ENCODE measurements at regions of chr2 and their contacts with region 1.

Region 1: DNA sequence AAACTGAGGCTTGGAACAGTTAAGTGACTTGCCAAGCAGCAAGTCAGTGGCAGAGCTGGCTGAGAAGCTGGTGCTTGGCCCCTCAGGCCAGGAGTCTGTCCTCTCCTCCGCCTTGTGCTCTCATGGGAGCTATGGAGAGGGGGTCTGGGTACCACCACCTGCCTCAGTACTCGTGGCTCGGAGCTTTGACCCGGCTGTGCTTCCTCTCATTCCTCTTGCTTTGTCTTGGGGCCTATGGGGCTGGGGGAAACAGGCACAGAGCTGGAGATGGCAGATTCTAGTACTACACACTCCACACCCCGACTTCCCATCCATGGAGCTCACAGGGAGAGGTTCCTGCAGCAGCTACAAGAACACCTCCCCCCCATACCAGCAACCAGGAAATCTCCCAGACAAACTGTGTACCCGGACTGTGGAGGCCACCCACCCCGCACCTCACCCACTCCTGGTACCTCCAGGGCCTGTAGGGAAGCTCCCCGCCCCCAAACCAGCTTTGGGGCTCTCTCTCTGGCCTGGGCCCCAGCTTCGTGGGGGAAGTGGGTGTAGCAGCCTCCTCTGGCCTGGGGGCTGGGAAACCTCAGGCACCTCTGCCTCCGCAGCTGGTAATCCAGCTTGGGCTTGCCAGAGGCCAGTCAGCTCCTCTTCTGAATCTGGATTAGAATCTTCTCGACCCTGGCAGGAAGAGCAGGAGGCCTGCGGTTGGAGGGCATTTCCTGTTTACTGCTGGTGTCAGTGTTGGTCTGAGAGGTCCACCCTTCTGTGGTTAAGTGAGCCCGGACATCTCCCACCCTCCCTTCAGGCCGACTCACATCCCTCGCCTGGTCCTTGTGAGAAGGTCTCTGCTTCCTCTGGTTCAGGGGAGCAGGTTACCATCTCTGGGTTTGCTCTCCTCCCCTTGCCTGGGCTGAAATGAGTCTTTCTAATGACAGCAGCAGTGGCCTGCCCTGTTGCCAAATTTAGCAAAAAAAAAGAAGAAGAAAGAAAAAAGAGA is 22.3 kb upstream of the RHOB start:
- DNase-seq: peak; percentile 57
- ATAC-seq: peak; percentile 76
- H3K4me3 ChIP-seq: peak overlapping the region; percentile 17; the same call in 1 of the 2 replicates
- H3K27ac ChIP-seq: peak overlapping the region; percentile 68
- H3K4me1 ChIP-seq: peaks cover 34% of the 10 kb centered on the region
- H3K27me3 ChIP-seq: no peaks in the 10 kb centered on the region
- CTCF ChIP-seq: no peak
- EP300 ChIP-seq: no peak
- POLR2A ChIP-seq: 0 out of 2 replicates have a peak, but pooled peaks have one; percentile 32
- RAD21 ChIP-seq: no peak

Region 2: GRCh38 chr2:20438334-20439192 is 14.0 kb after region 1 on chr2:
- CTCF ChIA-PET with region 1: interaction called, 9 read pairs
- POLR2A ChIA-PET with region 1: no interaction called
- RAD21 ChIA-PET with region 1: interaction called, 17 read pairs
- SMC1A ChIA-PET with region 1: interaction called, 4 read pairs
- in situ Hi-C with region 1: no loop called
- intact Hi-C with region 1: no loop called
- DNase-seq: no peak
- ATAC-seq: no peak
- H3K4me3 ChIP-seq: no peak overlapping the region
- H3K27ac ChIP-seq: no peak overlapping the region
- H3K4me1 ChIP-seq: no peaks in the 10 kb centered on the region
- H3K27me3 ChIP-seq: peaks cover 2 to 3% of the 10 kb centered on the region in 2 experiments; a peak in 2 of 4 replicates
- CTCF ChIP-seq: no peak
- EP300 ChIP-seq: no peak
- POLR2A ChIP-seq: no peak
- RAD21 ChIP-seq: no peak

Region 3: GRCh38 chr2:20456636-20457426 is 32.2 kb after region 1 on chr2:
- CTCF ChIA-PET with region 1: no interaction called
- POLR2A ChIA-PET with region 1: no interaction called
- RAD21 ChIA-PET with region 1: no interaction called
- SMC1A ChIA-PET with region 1: no interaction called
- in situ Hi-C with region 1: no loop called
- intact Hi-C with region 1: no loop called
- DNase-seq: no peak
- ATAC-seq: 0 out of 3 replicates have a peak, but pooled peaks have one; percentile 23
- H3K4me3 ChIP-seq: no peak overlapping the region
- H3K27ac ChIP-seq: no peak overlapping the region
- H3K4me1 ChIP-seq: no peaks in the 10 kb centered on the region
- H3K27me3 ChIP-seq: peaks cover 0 to 1% of the 10 kb centered on the region in 2 experiments; a peak in 2 of 4 replicates
- CTCF ChIP-seq: no peak
- EP300 ChIP-seq: no peak
- POLR2A ChIP-seq: no peak
- RAD21 ChIP-seq: no peak

Region 4: GRCh38 chr2:20617892-20618467 is 193.4 kb after region 1 on chr2:
- CTCF ChIA-PET with region 1: no interaction called
- POLR2A ChIA-PET with region 1: no interaction called
- RAD21 ChIA-PET with region 1: no interaction called
- SMC1A ChIA-PET with region 1: no interaction called
- in situ Hi-C with region 1: no loop called
- intact Hi-C with region 1: no loop called
- DNase-seq: no peak
- ATAC-seq: peak; percentile 67
- H3K4me3 ChIP-seq: no peak overlapping the region
- H3K27ac ChIP-seq: no peak overlapping the region
- H3K4me1 ChIP-seq: no peaks in the 10 kb centered on the region
- H3K27me3 ChIP-seq: no peaks in the 10 kb centered on the region
- CTCF ChIP-seq: 0 out of 6 replicates have a peak, but pooled peaks of 1 of the 3 experiments have one; percentile 15
- EP300 ChIP-seq: no peak
- POLR2A ChIP-seq: no peak
- RAD21 ChIP-seq: no peak

Region 5: GRCh38 chr2:20803226-20803682 is 378.7 kb after region 1 on chr2:
- CTCF ChIA-PET with region 1: no interaction called
- POLR2A ChIA-PET with region 1: no interaction called
- RAD21 ChIA-PET with region 1: no interaction called
- SMC1A ChIA-PET with region 1: no interaction called
- in situ Hi-C with region 1: no loop called
- intact Hi-C with region 1: no loop called
- DNase-seq: no peak
- ATAC-seq: no peak
- H3K4me3 ChIP-seq: no peak overlapping the region
- H3K27ac ChIP-seq: no peak overlapping the region
- H3K4me1 ChIP-seq: no peaks in the 10 kb centered on the region
- H3K27me3 ChIP-seq: no peaks in the 10 kb centered on the region
- CTCF ChIP-seq: no peak
- EP300 ChIP-seq: no peak
- POLR2A ChIP-seq: no peak
- RAD21 ChIP-seq: no peak